Activated naive CD4-positive, alpha-beta T cell treated with anti-CD3 and anti-CD28 coated beads, Interleukin-2, amount 10 ng/mL, durations not matched to agents 7 days and 5 days (primary cell): ENCODE measurements at regions of chr12 and their contacts with region 1.

Region 1: GRCh38 chr12:104108755-104109445 is 29.1 kb downstream of the NFYB start:
- DNase-seq: peak; percentile 93
- H3K4me3 Mint-ChIP-seq: no peak overlapping the region
- H3K27ac Mint-ChIP-seq: no peak overlapping the region
- H3K4me1 Mint-ChIP-seq: peaks cover 9% of the 10 kb centered on the region
- H3K27me3 Mint-ChIP-seq: no peaks in the 10 kb centered on the region

Region 2: DNA sequence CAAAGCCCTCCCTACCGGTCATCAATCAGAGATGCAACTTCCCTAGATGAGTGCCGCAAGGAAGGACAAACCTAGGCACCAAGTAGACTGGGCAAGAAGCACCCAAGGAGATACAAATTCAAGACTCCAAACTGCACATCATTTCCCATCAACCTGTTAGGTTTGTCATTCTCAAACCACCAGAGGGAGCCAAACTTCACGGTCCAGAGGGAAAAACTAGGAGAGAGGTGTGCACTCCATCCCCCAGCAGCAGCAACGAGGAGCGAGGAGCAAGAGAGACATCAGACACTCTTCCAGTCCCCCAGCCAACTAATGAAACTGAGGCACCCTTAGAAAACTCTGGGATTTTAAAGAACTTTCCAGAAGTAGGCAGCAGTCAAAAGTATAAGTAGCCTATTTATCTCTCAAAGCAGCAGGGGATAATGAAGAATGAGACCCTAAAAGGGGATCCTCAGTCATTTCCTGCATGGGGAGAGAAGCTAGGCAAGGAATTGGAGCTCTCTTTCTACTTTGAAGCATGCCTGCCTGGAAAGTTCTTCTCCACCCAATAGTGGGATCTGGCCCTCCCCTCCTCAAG is 230.9 kb before region 1 on chr12:
- CTCF ChIA-PET with region 1: interaction called, 29 read pairs
- DNase-seq: peak; percentile 71
- H3K4me3 Mint-ChIP-seq: no peak overlapping the region
- H3K27ac Mint-ChIP-seq: no peak overlapping the region
- H3K4me1 Mint-ChIP-seq: peaks cover 27% of the 10 kb centered on the region
- H3K27me3 Mint-ChIP-seq: no peaks in the 10 kb centered on the region

Region 3: DNA sequence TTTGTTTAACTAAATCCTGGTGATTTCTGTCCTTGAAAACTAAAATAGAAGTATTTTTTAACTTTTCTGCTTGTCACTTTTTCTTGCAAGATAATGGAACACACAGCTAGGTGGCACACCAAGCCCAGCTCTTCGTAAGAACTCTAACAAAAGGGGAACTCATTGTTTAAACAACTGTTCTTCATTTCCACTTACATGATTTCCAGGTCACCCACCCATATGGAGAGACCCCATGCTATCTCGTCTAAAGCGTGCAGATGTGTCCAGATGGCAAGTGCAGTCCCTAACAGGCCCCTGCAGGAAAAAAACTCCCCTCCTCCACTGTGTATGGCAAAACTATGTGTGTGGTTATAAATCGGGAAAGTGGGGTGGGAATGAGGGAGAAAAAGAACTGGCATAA is 224.6 kb before region 1 on chr12:
- CTCF ChIA-PET with region 1: interaction called, 25 read pairs
- DNase-seq: peak; percentile 57
- H3K4me3 Mint-ChIP-seq: no peak overlapping the region
- H3K27ac Mint-ChIP-seq: no peak overlapping the region
- H3K4me1 Mint-ChIP-seq: peaks cover 23% of the 10 kb centered on the region
- H3K27me3 Mint-ChIP-seq: no peaks in the 10 kb centered on the region

Region 4: DNA sequence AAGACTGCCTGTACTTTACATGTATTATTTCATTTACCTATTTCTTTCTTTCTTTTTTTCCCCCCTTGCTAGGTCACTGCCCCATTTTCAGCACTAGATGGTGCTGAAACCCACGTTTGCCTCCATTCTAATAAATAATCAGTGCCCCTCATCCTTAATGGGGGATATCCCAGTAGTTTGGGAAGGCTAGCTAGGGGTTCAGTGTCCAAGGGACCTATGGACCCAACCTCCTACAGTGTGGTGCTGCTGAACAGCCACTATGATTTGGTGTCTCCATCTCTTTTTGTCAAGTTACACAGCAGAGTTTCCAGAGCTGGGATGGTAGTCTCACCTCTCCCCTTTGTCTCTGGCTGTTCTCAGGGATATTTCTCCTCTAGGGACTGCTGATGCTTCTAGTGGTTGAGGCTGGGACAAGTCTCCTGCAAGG is 51.1 kb before region 1 on chr12:
- CTCF ChIA-PET with region 1: interaction called, 92 read pairs
- DNase-seq: peak; percentile 24
- H3K4me3 Mint-ChIP-seq: no peak overlapping the region
- H3K27ac Mint-ChIP-seq: no peak overlapping the region
- H3K4me1 Mint-ChIP-seq: no peaks in the 10 kb centered on the region
- H3K27me3 Mint-ChIP-seq: peaks cover 57% of the 10 kb centered on the region

Region 5: GRCh38 chr12:104064031-104064822 is 44.7 kb before region 1 on chr12 and contains the start of gene HCFC2:
- CTCF ChIA-PET with region 1: interaction called, 92 read pairs
- DNase-seq: peak; percentile 93
- H3K4me3 Mint-ChIP-seq: peak within 1 kb of the TSS; percentile 91
- H3K27ac Mint-ChIP-seq: peak within 1 kb of the TSS; percentile 85
- H3K4me1 Mint-ChIP-seq: peaks cover 21% of the 10 kb centered on the region
- H3K27me3 Mint-ChIP-seq: peaks cover 31% of the 10 kb centered on the region

Region 6: GRCh38 chr12:104090687-104091086 is 18.2 kb before region 1 on chr12:
- CTCF ChIA-PET with region 1: interaction called, 17 read pairs
- DNase-seq: no peak
- H3K4me3 Mint-ChIP-seq: no peak overlapping the region
- H3K27ac Mint-ChIP-seq: no peak overlapping the region
- H3K4me1 Mint-ChIP-seq: no peaks in the 10 kb centered on the region
- H3K27me3 Mint-ChIP-seq: no peaks in the 10 kb centered on the region

Region 7: GRCh38 chr12:104177663-104178501 is 69.0 kb after region 1 on chr12:
- CTCF ChIA-PET with region 1: no interaction called
- DNase-seq: peak; percentile 25
- H3K4me3 Mint-ChIP-seq: no peak overlapping the region
- H3K27ac Mint-ChIP-seq: no peak overlapping the region
- H3K4me1 Mint-ChIP-seq: peaks cover 10% of the 10 kb centered on the region
- H3K27me3 Mint-ChIP-seq: peaks cover 22% of the 10 kb centered on the region

Region 8: GRCh38 chr12:104399740-104400612 is 291.1 kb after region 1 on chr12:
- CTCF ChIA-PET with region 1: no interaction called
- DNase-seq: no peak
- H3K4me3 Mint-ChIP-seq: no peak overlapping the region
- H3K27ac Mint-ChIP-seq: no peak overlapping the region
- H3K4me1 Mint-ChIP-seq: peaks cover 10% of the 10 kb centered on the region
- H3K27me3 Mint-ChIP-seq: no peaks in the 10 kb centered on the region